ENCODE measurements at regions of chr1 and their contacts with region 1.

Region 1: GRCh38 chr1:209207701-209208286 is 375.7 kb upstream of the CAMK1G start:
- DNase-seq: peak; percentile 80
- ATAC-seq: peak; percentile 91

Region 2: DNA sequence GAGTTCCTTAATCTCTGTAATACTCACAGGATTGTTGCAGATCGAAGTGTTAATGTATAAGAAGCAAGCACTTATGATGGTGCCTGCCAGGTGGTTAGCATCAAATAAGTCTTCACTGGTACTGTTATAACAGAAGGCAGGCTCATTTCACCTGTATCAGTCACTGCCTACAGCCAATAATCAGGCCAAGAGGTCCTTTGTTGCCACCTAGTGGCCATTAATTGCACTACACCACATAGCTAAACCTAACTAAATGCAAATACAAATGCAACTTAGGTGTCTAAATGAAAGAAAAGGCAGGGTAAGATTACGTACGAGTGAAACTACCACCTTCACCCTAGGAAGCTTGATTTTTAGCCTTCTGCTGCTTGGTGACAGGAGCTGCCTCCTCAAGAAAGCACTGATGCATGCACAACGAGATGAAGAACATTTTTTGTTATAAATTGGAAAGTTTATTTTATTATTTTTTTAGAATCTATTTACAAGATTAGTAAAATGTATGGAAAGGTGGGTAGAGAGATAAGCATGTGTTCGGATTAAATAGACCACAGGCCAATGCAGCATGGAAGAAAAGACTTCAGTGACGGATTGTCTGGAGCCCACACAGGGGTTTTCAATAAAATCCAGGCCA is 41.0 kb after region 1 on chr1:
- intact Hi-C with region 1: loop called (anchors 2 kb)
- DNase-seq: no peak
- ATAC-seq: no peak

Region 3: DNA sequence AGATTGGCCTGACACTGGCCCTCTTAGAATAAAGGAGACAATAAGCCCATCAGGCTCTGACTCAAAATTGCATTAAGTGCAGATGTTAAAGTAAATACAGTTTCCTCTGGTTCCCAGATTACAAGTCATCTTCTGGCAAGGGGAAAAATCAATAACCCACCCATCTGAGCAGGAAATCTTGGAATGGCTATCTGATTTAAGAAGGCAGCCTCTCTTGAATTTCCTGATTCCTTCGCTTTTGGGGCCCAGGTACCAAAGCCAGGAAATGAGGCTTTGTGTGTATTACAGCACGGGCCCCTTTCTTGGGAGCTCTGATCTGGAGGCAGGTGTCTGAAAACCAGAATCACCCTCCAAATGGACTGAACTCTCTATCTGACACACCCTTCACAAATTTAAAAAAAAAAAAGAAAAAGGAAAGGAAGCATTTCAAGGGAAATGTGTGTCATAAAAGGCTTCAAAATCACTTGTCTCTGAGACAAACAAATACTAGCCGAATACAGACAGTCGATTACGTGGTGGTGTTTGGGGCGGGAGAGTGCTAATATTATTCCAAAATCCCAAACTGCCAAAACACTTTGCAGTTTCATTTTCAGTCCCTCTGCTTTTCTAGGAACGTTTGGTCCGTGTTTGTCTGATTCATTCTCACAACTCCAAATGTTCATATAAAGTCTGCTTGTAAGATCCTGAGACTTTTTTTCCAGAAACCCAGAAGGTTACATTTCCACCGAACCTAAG is 134.8 kb after region 1 on chr1:
- intact Hi-C with region 1: no loop called
- DNase-seq: no peak
- ATAC-seq: no peak

Region 4: GRCh38 chr1:209354111-209354839 is 146.5 kb after region 1 on chr1:
- intact Hi-C with region 1: loop called (anchors 10 kb)
- DNase-seq: peak; percentile 72
- ATAC-seq: peak; percentile 88

Region 5: GRCh38 chr1:209565759-209566678 is 358.2 kb after region 1 on chr1:
- intact Hi-C with region 1: loop called (anchors 5 kb)
- DNase-seq: no peak
- ATAC-seq: peak; percentile 69

Measured in Right ventricle myocardium inferior (tissue), 1 donor.